ENCODE measurements at regions of chr17 and their contacts with region 1.

Region 1: GRCh38 chr17:10844621-10845387 is 6.9 kb upstream of the PIRT start:
- DNase-seq: peak; percentile 90
- H3K4me3 ChIP-seq: peak overlapping the region; percentile 12 to 62 (median 35)
- H3K27ac ChIP-seq: no peak overlapping the region
- H3K4me1 ChIP-seq: peaks cover 6 to 17% (median 10%) of the 10 kb centered on the region in 6 donors
- H3K27me3 ChIP-seq: peaks cover 0 to 20% (median 0%) of the 10 kb centered on the region in 7 donors
- CTCF ChIP-seq: peak; percentile 85 to 94 (median 90)
- POLR2A ChIP-seq: no peak

Region 2: DNA sequence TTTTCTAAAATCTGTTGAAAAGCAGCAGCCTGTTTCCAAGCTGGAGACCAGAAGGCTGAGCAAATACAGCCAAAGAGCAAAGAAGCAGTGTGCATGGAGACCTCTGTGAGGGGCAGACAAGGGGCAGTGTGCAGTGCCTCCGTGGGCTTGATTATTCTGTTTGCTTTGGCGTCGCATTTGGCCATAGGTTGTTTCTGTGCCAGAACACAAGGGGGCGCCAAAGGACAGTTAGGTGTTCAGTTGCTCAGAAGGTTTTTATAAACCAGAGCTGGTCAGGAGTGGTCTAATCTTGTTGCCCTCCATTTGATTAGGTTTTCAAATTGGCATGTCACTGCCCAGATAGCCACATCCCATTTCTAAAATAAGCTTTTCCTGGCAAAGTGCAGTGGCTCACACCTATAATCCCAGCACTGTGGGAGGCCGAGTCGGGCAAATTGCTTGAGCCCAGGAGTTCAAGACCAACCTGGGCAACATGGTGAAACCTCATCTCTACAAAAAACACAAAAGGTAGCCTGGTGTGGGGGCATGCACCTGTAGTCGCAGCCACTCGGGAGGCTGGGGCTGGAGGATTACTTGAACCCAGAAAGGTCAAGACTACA is 198.3 kb before region 1 on chr17:
- intact Hi-C with region 1: loop called (anchors 1 kb)
- DNase-seq: peak; percentile 84
- H3K4me3 ChIP-seq: no peak overlapping the region
- H3K27ac ChIP-seq: no peak overlapping the region
- H3K4me1 ChIP-seq: peaks cover 0 to 5% (median 0%) of the 10 kb centered on the region in 6 donors
- H3K27me3 ChIP-seq: no peaks in the 10 kb centered on the region
- CTCF ChIP-seq: peak; percentile 64 to 92 (median 83)
- POLR2A ChIP-seq: no peak

Region 3: GRCh38 chr17:10737168-10737622 is 107.6 kb before region 1 on chr17:
- intact Hi-C with region 1: loop called (anchors 2 kb)
- DNase-seq: no peak
- H3K4me3 ChIP-seq: no peak overlapping the region
- H3K27ac ChIP-seq: no peak overlapping the region
- H3K4me1 ChIP-seq: peaks cover 0 to 8% (median 0%) of the 10 kb centered on the region in 6 donors
- H3K27me3 ChIP-seq: no peaks in the 10 kb centered on the region
- CTCF ChIP-seq: peak in 10 of 11 experiments; percentile 41 to 68 (median 60)
- POLR2A ChIP-seq: no peak

Region 4: DNA sequence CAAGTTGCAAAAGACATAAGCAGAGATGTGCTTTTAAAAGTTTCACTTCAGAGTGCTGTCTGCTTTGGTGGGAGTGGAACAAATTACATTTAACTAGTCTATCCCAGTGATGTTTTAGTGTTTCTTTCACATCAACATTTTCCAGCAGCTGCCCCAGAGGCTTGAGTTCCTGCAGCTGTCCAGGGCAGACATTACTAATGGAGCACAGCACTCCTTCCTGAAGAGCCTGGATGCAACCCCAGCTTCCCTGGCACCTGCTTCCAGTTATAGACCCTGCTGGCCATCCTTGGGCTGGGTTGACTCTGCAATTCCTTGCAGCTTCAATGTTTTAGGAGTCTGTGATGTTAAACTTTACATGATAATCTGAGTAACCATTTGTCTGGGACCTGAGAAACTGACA is 54.5 kb after region 1 on chr17:
- intact Hi-C with region 1: no loop called
- DNase-seq: no peak
- H3K4me3 ChIP-seq: no peak overlapping the region
- H3K27ac ChIP-seq: no peak overlapping the region
- H3K4me1 ChIP-seq: no peaks in the 10 kb centered on the region
- H3K27me3 ChIP-seq: no peaks in the 10 kb centered on the region
- CTCF ChIP-seq: no peak
- POLR2A ChIP-seq: no peak